ENCODE measurements at regions of chr1 and their contacts with region 1.

Region 1: GRCh38 chr1:22641906-22642636 is 1.4 kb upstream of the C1QC start:
- DNase-seq: peak; percentile 89 to 95
- ATAC-seq: peak; percentile 89
- H3K4me3 ChIP-seq: no peak overlapping the region
- H3K27ac ChIP-seq: no peak overlapping the region
- H3K4me1 ChIP-seq: no peaks in the 10 kb centered on the region
- H3K27me3 ChIP-seq: no peaks in the 10 kb centered on the region

Region 2: GRCh38 chr1:22105611-22106207 is 536.4 kb before region 1 on chr1:
- intact Hi-C with region 1: loop called in 1 of 2 experiments (anchors 10 kb)
- DNase-seq: no peak
- ATAC-seq: peak; percentile 58
- H3K4me3 ChIP-seq: no peak overlapping the region
- H3K27ac ChIP-seq: no peak overlapping the region
- H3K4me1 ChIP-seq: peaks cover 0 to 2% of the 10 kb centered on the region in 2 donors
- H3K27me3 ChIP-seq: no peaks in the 10 kb centered on the region

Region 3: DNA sequence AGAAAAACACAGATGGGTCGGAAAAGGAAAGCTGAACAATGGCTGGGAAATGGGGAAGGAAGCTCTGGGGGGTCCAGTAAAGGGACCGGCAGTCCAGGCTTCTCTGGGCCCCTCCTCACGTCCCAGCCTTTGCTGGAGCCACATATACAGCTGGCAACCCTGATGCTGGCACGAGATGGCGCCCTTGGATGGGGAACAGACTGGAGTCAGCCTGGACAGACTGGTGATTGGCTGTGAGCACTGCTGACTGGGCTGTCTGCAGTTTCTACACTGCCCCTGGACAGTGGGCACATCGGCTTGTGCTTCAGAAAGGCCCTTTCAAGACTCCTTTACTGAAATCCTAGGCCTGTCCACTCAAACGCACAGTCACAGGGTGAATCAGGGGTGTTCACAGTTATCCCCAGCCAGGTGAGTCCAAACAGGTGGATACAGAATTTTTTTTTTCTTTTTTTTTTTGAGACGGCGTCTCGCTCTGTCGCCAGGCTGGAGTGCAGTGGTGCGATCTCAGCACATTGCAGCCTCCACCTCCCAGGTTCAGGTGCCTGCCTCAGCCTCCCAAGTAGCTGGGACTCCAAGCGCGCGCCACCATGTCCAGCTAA is 221.5 kb before region 1 on chr1:
- intact Hi-C with region 1: loop called (anchors 1 kb)
- DNase-seq: peak; percentile 90 to 93
- ATAC-seq: peak; percentile 88
- H3K4me3 ChIP-seq: no peak overlapping the region
- H3K27ac ChIP-seq: no peak overlapping the region
- H3K4me1 ChIP-seq: no peaks in the 10 kb centered on the region
- H3K27me3 ChIP-seq: no peaks in the 10 kb centered on the region

Region 4: GRCh38 chr1:22527555-22528296 is 114.3 kb before region 1 on chr1:
- intact Hi-C with region 1: loop called (anchors 5 kb)
- DNase-seq: no peak
- ATAC-seq: no peak
- H3K4me3 ChIP-seq: no peak overlapping the region
- H3K27ac ChIP-seq: peak overlapping the region in 1 of 2 donors; percentile 39
- H3K4me1 ChIP-seq: no peaks in the 10 kb centered on the region
- H3K27me3 ChIP-seq: no peaks in the 10 kb centered on the region

Measured in aorta (tissue), 5 donors.